CD4-positive, alpha-beta T cell (primary cell): ENCODE measurements at regions of chr1 and their contacts with region 1.

Region 1: GRCh38 chr1:225777583-225778336 is at the start of gene SRP9:
- DNase-seq: peak; percentile 98 to 100 (median 99)
- ATAC-seq: peak; percentile 90
- H3K4me3 ChIP-seq: peak within 1 kb of the TSS; percentile 68
- H3K4me3 Mint-ChIP-seq: no peak within 1 kb of the TSS
- H3K27ac ChIP-seq: peak within 1 kb of the TSS; percentile 95 to 97
- H3K27ac Mint-ChIP-seq: no peak within 1 kb of the TSS
- H3K4me1 ChIP-seq: peaks cover 42% of the 10 kb centered on the region
- H3K4me1 Mint-ChIP-seq: peaks cover 15% of the 10 kb centered on the region
- H3K27me3 ChIP-seq: no peaks in the 10 kb centered on the region
- H3K27me3 Mint-ChIP-seq: no peaks in the 10 kb centered on the region
- CTCF ChIP-seq: peak; percentile 86
- total RNA-seq, gene SRP9: 63.7 to 69.8 TPM

Region 2: GRCh38 chr1:225428068-225428880 is 349.5 kb before region 1 on chr1:
- CTCF ChIA-PET with region 1: interaction called, 5 read pairs
- POLR2A ChIA-PET with region 1: interaction called, 15 read pairs
- intact Hi-C with region 1: loop called in 1 of 2 experiments (anchors 5 kb)
- DNase-seq: peak; percentile 83 to 96 (median 90)
- ATAC-seq: peak; percentile 89
- H3K4me3 ChIP-seq: peak overlapping the region; percentile 94
- H3K4me3 Mint-ChIP-seq: peak overlapping the region; percentile 90
- H3K27ac ChIP-seq: peak overlapping the region; percentile 84 to 85
- H3K27ac Mint-ChIP-seq: peak overlapping the region; percentile 84
- H3K4me1 ChIP-seq: peaks cover 33% of the 10 kb centered on the region
- H3K4me1 Mint-ChIP-seq: peaks cover 47% of the 10 kb centered on the region
- H3K27me3 ChIP-seq: no peaks in the 10 kb centered on the region
- H3K27me3 Mint-ChIP-seq: no peaks in the 10 kb centered on the region
- CTCF ChIP-seq: no peak

Region 3: GRCh38 chr1:225474986-225475820 is 302.6 kb before region 1 on chr1:
- CTCF ChIA-PET with region 1: interaction called, 5 read pairs
- POLR2A ChIA-PET with region 1: interaction called, 6 read pairs
- intact Hi-C with region 1: loop called in 1 of 2 experiments (anchors 5 kb)
- DNase-seq: peak; percentile 27 to 88 (median 60)
- ATAC-seq: peak; percentile 85
- H3K4me3 ChIP-seq: no peak overlapping the region
- H3K4me3 Mint-ChIP-seq: no peak overlapping the region
- H3K27ac ChIP-seq: no peak overlapping the region
- H3K27ac Mint-ChIP-seq: peak overlapping the region; percentile 39
- H3K4me1 ChIP-seq: peaks cover 55% of the 10 kb centered on the region
- H3K4me1 Mint-ChIP-seq: peaks cover 42% of the 10 kb centered on the region
- H3K27me3 ChIP-seq: no peaks in the 10 kb centered on the region
- H3K27me3 Mint-ChIP-seq: no peaks in the 10 kb centered on the region
- CTCF ChIP-seq: peak; percentile 100

Region 4: GRCh38 chr1:225809842-225810578 is 32.2 kb after region 1 on chr1 and contains the start of gene EPHX1:
- CTCF ChIA-PET with region 1: interaction called, 4 read pairs
- POLR2A ChIA-PET with region 1: interaction called, 42 read pairs
- intact Hi-C with region 1: no loop called
- DNase-seq: peak; percentile 26 to 75 (median 56)
- ATAC-seq: peak; percentile 84
- H3K4me3 ChIP-seq: peak within 1 kb of the TSS; percentile 51
- H3K4me3 Mint-ChIP-seq: peak within 1 kb of the TSS; percentile 87
- H3K27ac ChIP-seq: no peak within 1 kb of the TSS
- H3K27ac Mint-ChIP-seq: no peak within 1 kb of the TSS
- H3K4me1 ChIP-seq: peaks cover 10% of the 10 kb centered on the region
- H3K4me1 Mint-ChIP-seq: no peaks in the 10 kb centered on the region
- H3K27me3 ChIP-seq: no peaks in the 10 kb centered on the region
- H3K27me3 Mint-ChIP-seq: no peaks in the 10 kb centered on the region
- CTCF ChIP-seq: no peak
- total RNA-seq, gene EPHX1: 0.34 to 0.47 TPM

Region 5: GRCh38 chr1:225871359-225872074 is 93.8 kb after region 1 on chr1:
- CTCF ChIA-PET with region 1: interaction called, 5 read pairs
- POLR2A ChIA-PET with region 1: interaction called, 10 read pairs
- intact Hi-C with region 1: loop called in 1 of 2 experiments (anchors 5 kb)
- DNase-seq: peak in 1 of 14 experiments; percentile 40
- ATAC-seq: no peak
- H3K4me3 ChIP-seq: no peak overlapping the region
- H3K4me3 Mint-ChIP-seq: no peak overlapping the region
- H3K27ac ChIP-seq: peak overlapping the region in 1 of 2 donors; percentile 2
- H3K27ac Mint-ChIP-seq: peak overlapping the region; percentile 69
- H3K4me1 ChIP-seq: peaks cover 78% of the 10 kb centered on the region
- H3K4me1 Mint-ChIP-seq: peaks cover 73% of the 10 kb centered on the region
- H3K27me3 ChIP-seq: no peaks in the 10 kb centered on the region
- H3K27me3 Mint-ChIP-seq: no peaks in the 10 kb centered on the region
- CTCF ChIP-seq: no peak

Region 6: DNA sequence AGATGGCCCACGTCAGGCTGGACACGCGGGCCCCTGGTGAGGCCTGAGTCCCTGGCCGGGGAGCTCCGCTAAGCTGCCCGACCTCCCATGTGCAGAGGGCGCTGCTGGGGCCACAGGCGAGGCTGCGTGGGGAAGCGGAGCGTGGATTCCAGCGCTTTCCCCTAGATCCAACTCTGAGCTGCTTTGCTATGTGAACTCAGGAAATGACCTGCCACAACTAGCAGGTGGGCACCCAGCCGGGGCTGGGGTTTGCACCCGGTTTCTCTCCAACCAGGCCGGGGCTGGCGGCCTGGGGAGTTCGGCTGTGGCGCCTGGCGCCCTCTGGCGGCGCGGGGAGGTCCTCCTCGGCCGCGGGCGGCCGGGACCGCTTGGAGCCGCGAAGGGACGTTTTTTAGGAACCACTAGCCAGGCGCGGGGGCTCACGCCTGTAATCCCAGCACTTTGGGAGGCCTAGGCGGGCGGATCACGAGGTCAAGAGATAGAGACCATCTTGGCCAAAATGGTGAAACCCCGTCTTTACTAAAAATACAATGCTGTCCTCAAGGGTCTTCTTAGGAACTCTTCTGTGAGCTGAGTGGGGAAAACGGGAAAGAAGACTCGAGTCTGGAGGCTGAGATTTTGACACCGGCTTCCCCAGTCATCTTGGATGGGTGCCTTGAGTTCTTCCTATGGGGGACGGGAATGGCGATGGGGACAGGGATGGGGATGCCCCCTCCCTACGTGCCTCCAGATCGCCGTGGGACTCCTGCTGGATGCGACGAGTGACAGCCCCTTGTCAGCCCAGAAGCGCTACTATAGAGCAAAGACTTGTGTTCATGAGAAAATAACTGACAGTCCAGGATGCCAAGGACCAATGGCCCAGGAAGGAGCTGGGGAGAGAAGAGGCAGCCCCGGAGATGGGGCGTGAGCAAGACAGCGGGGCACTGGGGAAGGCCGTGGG is 133.7 kb after region 1 on chr1:
- CTCF ChIA-PET with region 1: interaction called, 5 read pairs
- POLR2A ChIA-PET with region 1: interaction called, 24 read pairs
- intact Hi-C with region 1: loop called in 1 of 2 experiments (anchors 5 kb)
- DNase-seq: peak; percentile 52 to 88 (median 69)
- ATAC-seq: peak; percentile 95
- H3K4me3 ChIP-seq: no peak overlapping the region
- H3K4me3 Mint-ChIP-seq: no peak overlapping the region
- H3K27ac ChIP-seq: no peak overlapping the region
- H3K27ac Mint-ChIP-seq: no peak overlapping the region
- H3K4me1 ChIP-seq: peaks cover 28% of the 10 kb centered on the region
- H3K4me1 Mint-ChIP-seq: peaks cover 42% of the 10 kb centered on the region
- H3K27me3 ChIP-seq: no peaks in the 10 kb centered on the region
- H3K27me3 Mint-ChIP-seq: no peaks in the 10 kb centered on the region
- CTCF ChIP-seq: peak; percentile 97